Prostate gland (tissue), 2 donors: ENCODE measurements at regions of chr6 and their contacts with region 1.

Region 1: GRCh38 chr6:131923356-131923755 is 27.8 kb downstream of the CCN2 start:
- DNase-seq: peak; percentile 30
- H3K4me3 ChIP-seq: no peak overlapping the region
- H3K27ac ChIP-seq: no peak overlapping the region
- H3K4me1 ChIP-seq: no peaks in the 10 kb centered on the region
- H3K27me3 ChIP-seq: no peaks in the 10 kb centered on the region
- CTCF ChIP-seq: peak in 3 of 4 experiments; percentile 44 to 49 (median 45)
- POLR2A ChIP-seq: no peak

Region 2: GRCh38 chr6:131159608-131160007 is 763.7 kb before region 1 on chr6:
- intact Hi-C with region 1: no loop called
- DNase-seq: no peak
- H3K4me3 ChIP-seq: no peak overlapping the region
- H3K27ac ChIP-seq: no peak overlapping the region
- H3K4me1 ChIP-seq: no peaks in the 10 kb centered on the region
- H3K27me3 ChIP-seq: no peaks in the 10 kb centered on the region
- CTCF ChIP-seq: no peak
- POLR2A ChIP-seq: no peak

Region 3: GRCh38 chr6:131683479-131683878 is 239.9 kb before region 1 on chr6:
- intact Hi-C with region 1: no loop called
- DNase-seq: no peak
- H3K4me3 ChIP-seq: no peak overlapping the region
- H3K27ac ChIP-seq: no peak overlapping the region
- H3K4me1 ChIP-seq: no peaks in the 10 kb centered on the region
- H3K27me3 ChIP-seq: no peaks in the 10 kb centered on the region
- CTCF ChIP-seq: no peak
- POLR2A ChIP-seq: no peak

Region 4: GRCh38 chr6:131819572-131820124 is 103.7 kb before region 1 on chr6:
- intact Hi-C with region 1: no loop called
- DNase-seq: no peak
- H3K4me3 ChIP-seq: no peak overlapping the region
- H3K27ac ChIP-seq: no peak overlapping the region
- H3K4me1 ChIP-seq: no peaks in the 10 kb centered on the region
- H3K27me3 ChIP-seq: no peaks in the 10 kb centered on the region
- CTCF ChIP-seq: no peak
- POLR2A ChIP-seq: no peak

Region 5: GRCh38 chr6:132161283-132161682 is 237.9 kb after region 1 on chr6:
- intact Hi-C with region 1: loop called (anchors 5 kb)
- DNase-seq: no peak
- H3K4me3 ChIP-seq: no peak overlapping the region
- H3K27ac ChIP-seq: no peak overlapping the region
- H3K4me1 ChIP-seq: no peaks in the 10 kb centered on the region
- H3K27me3 ChIP-seq: no peaks in the 10 kb centered on the region
- CTCF ChIP-seq: peak in 3 of 4 experiments; percentile 33 to 46 (median 35)
- POLR2A ChIP-seq: no peak

Region 6: GRCh38 chr6:132218059-132218696 is 294.8 kb after region 1 on chr6:
- intact Hi-C with region 1: loop called (anchors 2 kb)
- DNase-seq: no peak
- H3K4me3 ChIP-seq: no peak overlapping the region
- H3K27ac ChIP-seq: no peak overlapping the region
- H3K4me1 ChIP-seq: no peaks in the 10 kb centered on the region
- H3K27me3 ChIP-seq: no peaks in the 10 kb centered on the region
- CTCF ChIP-seq: peak in 3 of 4 experiments; percentile 38 to 52 (median 45)
- POLR2A ChIP-seq: no peak